H1 (cell line): ENCODE measurements at regions of chr9 and their contacts with region 1.

Region 1: GRCh38 chr9:34403554-34404380 is 27.1 kb upstream of the MYORG start:
- DNase-seq: peak in 1 of 2 experiments; percentile 90
- H3K4me3 ChIP-seq: no peak overlapping the region
- H3K27ac ChIP-seq: no peak overlapping the region
- H3K4me1 ChIP-seq: no peaks in the 10 kb centered on the region
- H3K27me3 ChIP-seq: no peaks in the 10 kb centered on the region
- CTCF ChIP-seq: peak; percentile 79 to 98 (median 98)
- EP300 ChIP-seq: no peak
- POLR2A ChIP-seq: no peak
- RAD21 ChIP-seq: peak; percentile 86 to 92

Region 2: DNA sequence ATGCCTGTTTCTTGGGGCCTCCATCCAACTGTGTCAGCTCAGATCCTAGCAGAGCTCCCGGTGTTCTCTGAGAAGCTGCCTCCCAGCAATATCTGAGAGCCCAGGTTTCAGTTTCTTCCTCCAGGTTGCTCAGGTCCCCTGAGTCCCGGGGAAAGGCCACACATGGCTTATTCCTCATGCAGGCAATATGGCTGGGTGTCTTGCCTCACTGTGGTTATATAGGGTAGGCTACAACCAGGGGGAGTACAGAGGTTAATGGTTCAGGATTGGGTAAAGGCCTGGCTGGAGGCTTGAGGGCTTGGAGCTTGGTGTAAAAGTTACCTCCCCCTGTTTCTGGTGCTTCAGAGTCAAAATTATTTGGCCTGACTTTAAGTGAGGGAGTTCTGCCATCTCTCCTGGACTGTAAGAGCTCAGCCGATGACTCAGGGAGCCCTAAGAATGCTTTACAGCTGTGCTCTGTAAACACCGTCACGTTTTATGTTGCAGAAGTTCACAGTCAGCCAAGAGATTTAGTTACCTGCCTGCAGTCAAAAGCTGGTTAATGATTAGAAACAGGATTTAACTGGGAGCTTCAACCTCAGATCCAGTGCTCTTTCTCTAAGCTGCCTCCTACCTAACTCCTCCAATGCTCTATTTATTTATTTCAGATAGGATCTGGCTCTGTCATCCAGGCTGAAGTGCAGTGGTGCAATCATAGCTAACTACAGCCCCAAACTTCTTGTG is 330.7 kb before region 1 on chr9:
- CTCF ChIA-PET with region 1: no interaction called
- POLR2A ChIA-PET with region 1: no interaction called
- DNase-seq: peak in 1 of 2 experiments; percentile 49
- H3K4me3 ChIP-seq: no peak overlapping the region
- H3K27ac ChIP-seq: peak overlapping the region; percentile 49
- H3K4me1 ChIP-seq: peaks cover 0 to 11% (median 5%) of the 10 kb centered on the region in 4 experiments; a peak in 5 of 7 replicates
- H3K27me3 ChIP-seq: no peaks in the 10 kb centered on the region
- CTCF ChIP-seq: no peak
- EP300 ChIP-seq: no peak
- POLR2A ChIP-seq: no peak
- RAD21 ChIP-seq: no peak

Region 3: DNA sequence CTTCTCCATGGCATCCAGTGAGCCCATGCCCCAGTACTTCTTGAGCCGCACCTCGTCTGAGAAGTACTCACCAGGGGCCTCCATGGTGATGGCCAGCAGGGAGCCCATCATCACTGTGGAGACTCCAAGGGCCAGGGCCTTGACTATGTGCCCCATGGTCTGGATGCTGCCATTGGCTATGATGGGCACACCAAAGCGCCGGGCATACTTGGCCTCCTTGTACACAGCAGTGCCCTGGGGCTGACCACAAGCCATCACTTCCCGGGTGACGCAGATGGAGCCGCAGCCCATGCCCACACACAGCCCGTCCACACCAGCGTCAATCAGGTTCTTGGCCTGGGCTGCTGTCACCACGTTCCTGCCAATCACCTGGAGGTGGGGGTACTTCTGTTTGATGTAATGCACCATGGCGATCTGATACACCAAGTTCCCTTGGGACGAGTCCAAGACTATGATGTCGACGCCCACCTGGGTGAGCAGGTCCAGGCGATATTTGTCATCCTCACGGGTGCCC is 270.3 kb before region 1 on chr9:
- CTCF ChIA-PET with region 1: no interaction called
- POLR2A ChIA-PET with region 1: no interaction called
- DNase-seq: no peak
- H3K4me3 ChIP-seq: no peak overlapping the region
- H3K27ac ChIP-seq: no peak overlapping the region
- H3K4me1 ChIP-seq: no peaks in the 10 kb centered on the region
- H3K27me3 ChIP-seq: no peaks in the 10 kb centered on the region
- CTCF ChIP-seq: no peak
- EP300 ChIP-seq: no peak
- POLR2A ChIP-seq: no peak
- RAD21 ChIP-seq: no peak

Region 4: DNA sequence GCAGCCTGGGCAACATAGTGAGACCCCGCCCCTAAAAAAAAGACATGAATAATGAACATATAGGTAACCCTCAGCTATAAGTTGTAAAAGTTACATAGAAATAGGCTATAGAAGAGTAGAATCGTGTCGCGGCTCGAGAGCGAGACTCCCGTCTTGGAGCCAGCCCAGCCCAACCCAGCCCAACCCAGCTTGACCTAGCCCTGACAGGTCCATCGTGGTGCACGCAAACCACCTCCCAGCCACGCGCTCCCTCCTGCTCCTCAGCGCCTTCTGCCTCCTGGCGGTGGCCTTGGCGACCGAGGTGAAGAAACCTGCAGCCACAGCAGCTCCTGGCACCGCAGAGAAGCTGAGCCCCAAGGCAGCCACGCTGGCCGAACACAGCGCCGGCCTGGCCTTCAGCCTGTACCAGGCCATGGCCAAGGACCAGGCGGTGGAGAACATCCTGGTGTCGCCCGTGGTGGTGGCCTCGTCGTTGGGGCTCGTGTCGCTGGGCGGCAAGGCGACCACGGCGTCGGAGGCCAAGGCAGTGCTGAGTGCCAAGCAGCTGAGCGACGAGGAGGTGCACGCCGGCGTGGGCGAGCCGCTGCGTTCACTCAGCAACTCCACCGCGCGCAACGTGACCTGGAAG is 85.5 kb before region 1 on chr9:
- CTCF ChIA-PET with region 1: no interaction called
- POLR2A ChIA-PET with region 1: no interaction called
- DNase-seq: no peak
- H3K4me3 ChIP-seq: no peak overlapping the region
- H3K27ac ChIP-seq: no peak overlapping the region
- H3K4me1 ChIP-seq: no peaks in the 10 kb centered on the region
- H3K27me3 ChIP-seq: no peaks in the 10 kb centered on the region
- CTCF ChIP-seq: peak in 2 of 3 experiments; percentile 5 to 14; a peak in 1 of 4 replicates
- EP300 ChIP-seq: no peak
- POLR2A ChIP-seq: no peak
- RAD21 ChIP-seq: no peak

Region 5: GRCh38 chr9:34376596-34377403 is 27.0 kb before region 1 on chr9 and contains the start of gene MYORG:
- CTCF ChIA-PET with region 1: interaction called, 28 read pairs
- POLR2A ChIA-PET with region 1: no interaction called
- DNase-seq: peak; percentile 98
- H3K4me3 ChIP-seq: peak within 1 kb of the TSS; percentile 61 to 75 (median 68)
- H3K27ac ChIP-seq: no peak within 1 kb of the TSS
- H3K4me1 ChIP-seq: peaks cover 6 to 15% (median 7%) of the 10 kb centered on the region in 4 experiments
- H3K27me3 ChIP-seq: peaks cover 3 to 26% (median 22%) of the 10 kb centered on the region in 4 experiments
- CTCF ChIP-seq: no peak
- EP300 ChIP-seq: no peak
- POLR2A ChIP-seq: no peak; a peak in 1 of 3 replicates
- RAD21 ChIP-seq: no peak
- total RNA-seq, gene MYORG: 5.0 and 5.9 TPM in 2 replicates

Region 6: DNA sequence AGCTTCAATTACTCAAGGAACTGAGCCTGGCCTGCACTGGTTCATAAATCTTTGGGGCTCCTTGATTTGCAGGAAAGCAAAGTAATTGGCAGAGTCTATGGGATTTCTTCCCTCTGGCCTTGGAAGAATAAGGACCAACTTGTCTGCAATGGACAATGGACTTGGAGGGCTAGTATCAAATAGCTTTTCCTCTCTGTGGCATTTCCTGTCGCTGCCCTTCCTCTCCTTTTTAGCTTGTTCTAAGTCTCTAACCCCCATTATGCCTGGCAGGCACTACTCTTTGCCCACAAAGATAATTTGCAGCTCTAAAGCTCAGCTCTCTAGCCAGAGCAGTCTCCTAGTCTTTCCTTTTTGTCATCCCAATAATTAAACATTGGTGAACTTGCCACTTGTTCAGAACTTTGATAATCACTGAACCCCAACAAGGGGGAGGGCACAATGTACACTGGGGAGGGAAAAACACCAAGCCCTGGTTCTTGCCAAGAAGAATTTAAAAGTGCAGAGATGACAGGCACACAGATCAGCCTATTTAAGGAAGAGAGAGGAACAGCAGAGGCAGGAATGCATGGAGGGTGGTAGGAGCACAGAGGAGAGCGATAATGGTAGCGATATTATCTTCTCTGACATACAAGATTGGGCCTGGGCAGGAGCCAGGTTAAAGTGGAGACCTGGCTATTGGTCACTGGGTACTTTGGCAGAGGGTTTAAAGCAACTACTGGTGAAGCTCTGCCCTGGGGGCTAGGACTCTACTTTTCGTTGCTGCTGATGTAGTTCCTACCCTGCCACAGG is 16.1 kb after region 1 on chr9:
- CTCF ChIA-PET with region 1: interaction called, 35 read pairs
- POLR2A ChIA-PET with region 1: no interaction called
- DNase-seq: no peak
- H3K4me3 ChIP-seq: no peak overlapping the region
- H3K27ac ChIP-seq: no peak overlapping the region
- H3K4me1 ChIP-seq: no peaks in the 10 kb centered on the region
- H3K27me3 ChIP-seq: no peaks in the 10 kb centered on the region; a peak in 1 of 7 replicates
- CTCF ChIP-seq: no peak
- EP300 ChIP-seq: no peak
- POLR2A ChIP-seq: no peak
- RAD21 ChIP-seq: no peak

Region 7: GRCh38 chr9:34437006-34437925 is 33.5 kb after region 1 on chr9:
- CTCF ChIA-PET with region 1: interaction called, 24 read pairs
- POLR2A ChIA-PET with region 1: no interaction called
- DNase-seq: peak; percentile 47 to 73
- H3K4me3 ChIP-seq: no peak overlapping the region
- H3K27ac ChIP-seq: no peak overlapping the region
- H3K4me1 ChIP-seq: no peaks in the 10 kb centered on the region
- H3K27me3 ChIP-seq: no peaks in the 10 kb centered on the region
- CTCF ChIP-seq: peak in 2 of 3 experiments; percentile 91 to 94; a peak in 3 of 4 replicates
- EP300 ChIP-seq: no peak
- POLR2A ChIP-seq: no peak
- RAD21 ChIP-seq: peak; percentile 95 to 99

Region 8: GRCh38 chr9:34479431-34479866 is 75.7 kb after region 1 on chr9:
- CTCF ChIA-PET with region 1: interaction called, 17 read pairs
- POLR2A ChIA-PET with region 1: no interaction called
- DNase-seq: no peak
- H3K4me3 ChIP-seq: no peak overlapping the region
- H3K27ac ChIP-seq: no peak overlapping the region
- H3K4me1 ChIP-seq: no peaks in the 10 kb centered on the region
- H3K27me3 ChIP-seq: no peaks in the 10 kb centered on the region; a peak in 1 of 7 replicates
- CTCF ChIP-seq: no peak
- EP300 ChIP-seq: no peak
- POLR2A ChIP-seq: no peak
- RAD21 ChIP-seq: no peak

Region 9: GRCh38 chr9:34500623-34501267 is 97.0 kb after region 1 on chr9:
- CTCF ChIA-PET with region 1: interaction called, 56 read pairs
- POLR2A ChIA-PET with region 1: no interaction called
- DNase-seq: peak in 1 of 2 experiments; percentile 91
- H3K4me3 ChIP-seq: no peak overlapping the region
- H3K27ac ChIP-seq: no peak overlapping the region
- H3K4me1 ChIP-seq: 0 out of 7 replicates have a peak, but pooled peaks cover 0 to 3% (median 0%) of the 10 kb centered on the region in 4 experiments
- H3K27me3 ChIP-seq: no peaks in the 10 kb centered on the region; a peak in 1 of 7 replicates
- CTCF ChIP-seq: peak; percentile 90 to 97 (median 96)
- EP300 ChIP-seq: no peak
- POLR2A ChIP-seq: no peak
- RAD21 ChIP-seq: peak; percentile 92 to 93

Region 10: GRCh38 chr9:34591248-34591916 is 187.6 kb after region 1 on chr9:
- CTCF ChIA-PET with region 1: interaction called, 10 read pairs
- POLR2A ChIA-PET with region 1: no interaction called
- DNase-seq: peak in 1 of 2 experiments; percentile 98
- H3K4me3 ChIP-seq: peak overlapping the region in 2 of 4 experiments; percentile 51 to 74; a peak in 4 of 8 replicates
- H3K27ac ChIP-seq: no peak overlapping the region
- H3K4me1 ChIP-seq: peaks cover 4 to 30% (median 16%) of the 10 kb centered on the region in 4 experiments
- H3K27me3 ChIP-seq: peaks cover 67 to 80% (median 75%) of the 10 kb centered on the region in 4 experiments
- CTCF ChIP-seq: peak; percentile 92 to 98 (median 96)
- EP300 ChIP-seq: no peak
- POLR2A ChIP-seq: no peak
- RAD21 ChIP-seq: peak; percentile 91 to 93